ENCODE measurements at regions of chr12 and their contacts with region 1.

Region 1: GRCh38 chr12:122767691-122768090 is 6.7 kb upstream of the CCDC62 start:
- DNase-seq: no peak
- H3K4me3 ChIP-seq: no peak overlapping the region
- H3K27ac ChIP-seq: no peak overlapping the region
- H3K4me1 ChIP-seq: no peaks in the 10 kb centered on the region
- H3K27me3 ChIP-seq: no peaks in the 10 kb centered on the region
- CTCF ChIP-seq: no peak
- POLR2A ChIP-seq: no peak

Region 2: DNA sequence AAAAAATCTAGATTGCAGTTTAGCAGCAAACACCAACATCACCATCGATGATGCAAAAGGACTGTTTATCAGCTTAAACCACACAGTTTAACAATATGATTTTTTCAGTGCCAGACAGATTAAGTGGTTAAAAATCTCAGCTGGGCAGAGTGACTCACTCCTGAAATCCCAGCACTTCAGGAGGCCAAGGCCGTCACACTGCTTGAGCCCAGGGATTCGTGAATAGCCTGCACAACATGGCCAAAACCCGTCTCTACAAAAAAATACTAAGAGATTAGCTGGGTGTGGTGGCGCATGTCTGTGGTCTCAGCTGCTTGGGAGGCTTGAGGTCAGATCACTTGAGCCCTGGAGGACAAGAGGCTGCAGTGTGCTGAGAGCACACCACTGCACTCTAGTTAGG is 249.8 kb before region 1 on chr12:
- intact Hi-C with region 1: loop called (anchors 10 kb)
- DNase-seq: no peak
- H3K4me3 ChIP-seq: no peak overlapping the region
- H3K27ac ChIP-seq: no peak overlapping the region
- H3K4me1 ChIP-seq: peaks cover 3 to 6% of the 10 kb centered on the region in 2 donors
- H3K27me3 ChIP-seq: no peaks in the 10 kb centered on the region
- CTCF ChIP-seq: no peak
- POLR2A ChIP-seq: no peak

Region 3: DNA sequence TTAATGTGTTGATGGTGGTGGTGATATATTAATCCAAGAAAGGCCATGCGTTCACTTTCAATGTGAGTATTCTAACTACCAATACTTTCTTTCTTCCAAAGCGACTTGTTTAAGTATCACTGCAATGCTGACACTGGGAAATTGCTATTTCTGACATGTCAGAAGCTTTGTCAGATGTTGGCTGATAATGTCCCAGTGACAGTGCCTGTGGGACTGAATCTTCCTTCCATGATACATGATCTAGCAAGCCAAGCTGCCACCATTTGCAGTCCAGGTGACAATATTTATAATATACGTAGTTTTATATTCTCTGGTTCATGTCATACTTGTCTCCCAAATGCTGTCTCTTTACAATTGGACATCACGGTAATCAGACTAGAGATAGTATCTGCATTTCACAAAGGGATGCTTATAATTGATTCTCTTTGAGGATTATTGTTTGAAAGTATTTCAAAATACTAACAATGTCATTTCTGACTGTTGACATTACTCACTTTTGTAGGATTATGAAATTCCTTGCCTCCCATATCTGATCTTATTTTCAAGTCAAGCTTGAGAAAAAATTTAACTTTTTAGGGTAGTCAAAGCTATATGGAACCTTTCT is 183.4 kb before region 1 on chr12:
- intact Hi-C with region 1: no loop called
- DNase-seq: no peak
- H3K4me3 ChIP-seq: no peak overlapping the region
- H3K27ac ChIP-seq: no peak overlapping the region
- H3K4me1 ChIP-seq: no peaks in the 10 kb centered on the region
- H3K27me3 ChIP-seq: no peaks in the 10 kb centered on the region
- CTCF ChIP-seq: no peak
- POLR2A ChIP-seq: no peak

Measured in thyroid gland (tissue), 4 donors.